ENCODE measurements at regions of chr5 and their contacts with region 1.

Region 1: DNA sequence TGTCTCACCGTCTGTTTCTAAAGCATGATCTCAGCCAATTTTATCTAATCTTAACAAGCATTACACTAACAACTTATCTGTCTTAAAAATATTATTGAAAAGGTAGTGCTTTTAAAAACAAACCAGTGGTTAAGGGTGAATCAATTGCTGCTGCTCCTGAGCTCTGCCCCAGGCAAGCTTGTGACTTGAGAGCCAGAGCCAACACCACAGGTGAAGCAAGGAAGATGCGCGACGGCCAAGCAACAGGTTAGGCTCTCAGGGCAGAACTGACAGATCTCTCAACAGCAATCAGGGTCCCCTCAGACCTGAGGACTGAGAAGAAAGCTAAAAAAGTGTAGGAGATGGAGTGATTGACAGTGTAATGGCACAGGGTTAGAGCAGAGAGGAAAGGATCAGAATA is 160.1 kb downstream of the CTNND2 start:
- DNase-seq: no peak
- H3K4me3 ChIP-seq: no peak overlapping the region
- H3K27ac ChIP-seq: no peak overlapping the region
- H3K4me1 ChIP-seq: no peaks in the 10 kb centered on the region
- H3K27me3 ChIP-seq: no peaks in the 10 kb centered on the region
- CTCF ChIP-seq: no peak

Region 2: GRCh38 chr5:11452852-11453251 is 291.3 kb before region 1 on chr5:
- CTCF ChIA-PET with region 1: no interaction called
- POLR2A ChIA-PET with region 1: no interaction called
- intact Hi-C with region 1: no loop called
- DNase-seq: no peak
- H3K4me3 ChIP-seq: no peak overlapping the region
- H3K27ac ChIP-seq: no peak overlapping the region
- H3K4me1 ChIP-seq: no peaks in the 10 kb centered on the region
- H3K27me3 ChIP-seq: peaks cover 58% of the 10 kb centered on the region
- CTCF ChIP-seq: no peak

Region 3: GRCh38 chr5:11642438-11642837 is 101.7 kb before region 1 on chr5:
- CTCF ChIA-PET with region 1: no interaction called
- POLR2A ChIA-PET with region 1: no interaction called
- intact Hi-C with region 1: no loop called
- DNase-seq: no peak
- H3K4me3 ChIP-seq: no peak overlapping the region
- H3K27ac ChIP-seq: no peak overlapping the region
- H3K4me1 ChIP-seq: no peaks in the 10 kb centered on the region
- H3K27me3 ChIP-seq: no peaks in the 10 kb centered on the region
- CTCF ChIP-seq: no peak

Region 4: DNA sequence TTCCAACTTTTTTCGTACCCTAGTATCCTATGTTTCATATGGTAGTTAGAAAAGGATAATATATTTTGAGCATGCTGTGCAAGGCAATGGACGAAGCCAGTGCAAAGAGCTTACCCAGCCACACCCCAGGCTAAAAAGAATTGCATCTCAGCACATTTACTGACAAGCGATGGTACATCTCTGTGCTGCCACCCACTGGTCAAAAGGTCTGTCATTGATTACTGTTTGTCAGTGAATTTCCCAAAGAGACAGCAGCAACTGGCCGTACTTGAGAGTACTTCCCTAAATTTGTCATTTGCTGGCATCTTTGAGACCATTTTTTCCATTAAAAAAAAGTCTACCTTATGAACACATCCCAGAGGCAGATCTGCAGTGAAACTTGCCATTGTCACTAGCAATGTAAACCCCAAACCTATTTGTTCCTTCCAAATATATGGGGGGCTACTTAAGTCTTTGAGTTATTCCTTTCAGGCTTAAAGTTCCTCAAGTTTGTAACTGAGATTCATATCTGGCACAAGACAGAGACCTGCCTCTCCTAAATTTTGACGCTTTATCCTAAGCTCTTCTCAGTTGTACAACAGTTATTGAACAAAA is 24.1 kb before region 1 on chr5:
- CTCF ChIA-PET with region 1: no interaction called
- POLR2A ChIA-PET with region 1: interaction called, 18 read pairs
- intact Hi-C with region 1: no loop called
- DNase-seq: peak in 1 of 2 experiments; percentile 44
- H3K4me3 ChIP-seq: no peak overlapping the region
- H3K27ac ChIP-seq: no peak overlapping the region
- H3K4me1 ChIP-seq: no peaks in the 10 kb centered on the region
- H3K27me3 ChIP-seq: no peaks in the 10 kb centered on the region
- CTCF ChIP-seq: peak; percentile 57

Region 5: DNA sequence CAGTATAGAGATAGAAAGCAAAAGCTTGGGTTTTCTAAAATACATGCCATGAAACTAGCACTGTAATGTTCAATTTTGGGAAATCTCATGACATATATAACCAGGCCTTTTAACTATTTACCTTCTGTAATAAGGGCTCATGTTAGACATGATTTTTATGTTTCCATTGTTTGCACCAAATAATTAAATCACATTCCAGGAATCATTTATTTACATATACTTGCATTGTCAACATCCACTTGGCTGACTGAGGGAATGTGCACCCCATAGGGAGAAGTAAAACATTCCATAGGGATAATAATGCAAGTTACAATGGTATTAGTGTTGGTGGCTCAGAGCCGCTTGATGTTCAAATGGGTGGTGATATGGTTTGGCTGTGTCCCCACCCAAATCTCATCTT is 21.8 kb after region 1 on chr5:
- CTCF ChIA-PET with region 1: no interaction called
- POLR2A ChIA-PET with region 1: no interaction called
- intact Hi-C with region 1: no loop called
- DNase-seq: no peak
- H3K4me3 ChIP-seq: no peak overlapping the region
- H3K27ac ChIP-seq: no peak overlapping the region
- H3K4me1 ChIP-seq: no peaks in the 10 kb centered on the region
- H3K27me3 ChIP-seq: no peaks in the 10 kb centered on the region
- CTCF ChIP-seq: no peak

Measured in PC-9 (cell line).